ENCODE measurements at regions of chr2 and their contacts with region 1.

Region 1: GRCh38 chr2:74321737-74322136 is 21.5 kb downstream of the SLC4A5 start:
- DNase-seq: no peak
- H3K4me3 Mint-ChIP-seq: no peak overlapping the region
- H3K27ac Mint-ChIP-seq: no peak overlapping the region
- H3K4me1 Mint-ChIP-seq: no peaks in the 10 kb centered on the region
- H3K27me3 Mint-ChIP-seq: peaks cover 4% of the 10 kb centered on the region

Region 2: DNA sequence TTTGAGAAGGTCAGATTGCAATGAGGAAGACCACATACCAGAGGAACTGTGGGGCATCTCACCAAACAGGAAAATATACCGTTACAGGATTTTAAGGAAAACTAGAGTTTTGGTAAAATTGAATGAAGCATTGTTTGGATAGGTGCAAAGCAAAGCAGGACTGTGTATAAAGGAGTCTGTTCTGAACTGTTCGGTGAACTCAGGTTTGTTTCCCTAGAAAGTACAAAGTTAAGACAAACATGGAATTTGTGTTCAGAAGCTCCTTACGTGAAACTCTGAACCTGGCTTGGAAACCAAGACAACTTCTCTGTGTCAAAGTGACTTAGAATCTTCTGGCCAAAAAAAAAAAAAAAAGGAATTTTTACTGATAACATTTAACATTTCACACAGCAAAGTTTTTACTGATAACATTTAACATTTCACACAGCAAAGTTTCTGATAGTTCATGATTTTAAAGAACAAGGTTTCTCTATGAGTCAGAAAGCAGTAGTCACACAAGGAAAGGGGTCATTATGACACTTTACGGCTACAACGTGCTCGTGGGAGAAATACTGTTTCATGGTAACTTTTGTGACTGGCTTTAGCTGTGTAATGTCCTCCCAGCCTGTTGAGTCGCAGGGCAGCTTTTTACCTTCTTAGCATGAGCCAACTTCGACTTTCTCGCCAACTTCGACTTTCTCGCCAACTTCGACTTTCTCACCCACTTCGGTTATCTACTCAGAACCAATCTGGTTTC is 358.2 kb before region 1 on chr2:
- CTCF ChIA-PET with region 1: no interaction called
- POLR2A ChIA-PET with region 1: no interaction called
- DNase-seq: no peak
- H3K4me3 Mint-ChIP-seq: no peak overlapping the region
- H3K27ac Mint-ChIP-seq: no peak overlapping the region
- H3K4me1 Mint-ChIP-seq: peaks cover 37% of the 10 kb centered on the region
- H3K27me3 Mint-ChIP-seq: no peaks in the 10 kb centered on the region

Region 3: DNA sequence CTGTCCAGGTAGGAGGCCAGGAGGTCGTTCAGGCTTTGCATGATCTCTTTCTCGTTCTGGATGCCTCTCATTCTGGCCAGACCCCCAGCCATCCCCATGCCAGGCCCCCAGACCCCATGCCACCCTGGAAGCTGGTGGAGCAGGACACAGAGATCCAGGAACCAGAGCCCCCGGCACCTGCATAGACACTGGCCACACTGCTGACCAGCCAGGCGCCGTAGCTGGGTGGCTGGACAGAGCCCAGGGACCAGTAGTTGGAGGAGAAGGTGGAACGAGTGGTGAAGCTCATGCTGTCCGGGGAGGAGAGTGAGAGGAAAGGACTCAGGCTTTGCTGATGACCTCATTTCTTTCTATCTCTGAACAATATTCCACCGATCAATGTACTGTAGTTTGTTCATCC is 14.0 kb before region 1 on chr2:
- CTCF ChIA-PET with region 1: no interaction called
- POLR2A ChIA-PET with region 1: no interaction called
- DNase-seq: no peak
- H3K4me3 Mint-ChIP-seq: no peak overlapping the region
- H3K27ac Mint-ChIP-seq: no peak overlapping the region
- H3K4me1 Mint-ChIP-seq: no peaks in the 10 kb centered on the region
- H3K27me3 Mint-ChIP-seq: no peaks in the 10 kb centered on the region

Region 4: DNA sequence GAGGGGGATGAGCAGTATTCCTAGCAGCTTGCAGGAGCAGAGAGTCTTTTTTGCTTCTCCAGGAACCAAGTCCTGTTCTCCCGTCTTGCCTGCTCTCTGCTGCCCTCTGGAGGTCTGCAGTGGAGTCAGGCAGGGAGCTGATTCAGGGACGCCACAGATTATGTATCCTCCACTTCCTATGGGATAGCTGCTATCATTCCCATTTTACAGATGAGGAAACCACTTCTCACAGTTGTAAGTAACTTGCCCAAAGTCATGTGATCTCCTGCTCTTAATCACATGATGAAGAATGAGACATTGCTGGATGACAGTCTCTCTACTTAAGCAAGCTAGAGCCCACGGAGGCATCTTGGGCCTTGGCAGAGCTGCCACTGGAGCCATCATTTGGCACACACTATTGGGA is 13.2 kb after region 1 on chr2:
- CTCF ChIA-PET with region 1: interaction called, 39 read pairs
- POLR2A ChIA-PET with region 1: no interaction called
- DNase-seq: peak; percentile 80
- H3K4me3 Mint-ChIP-seq: no peak overlapping the region
- H3K27ac Mint-ChIP-seq: no peak overlapping the region
- H3K4me1 Mint-ChIP-seq: peaks cover 6% of the 10 kb centered on the region
- H3K27me3 Mint-ChIP-seq: no peaks in the 10 kb centered on the region